Natural killer cell (primary cell): ENCODE measurements at regions of chr9 and their contacts with region 1.

Region 1: DNA sequence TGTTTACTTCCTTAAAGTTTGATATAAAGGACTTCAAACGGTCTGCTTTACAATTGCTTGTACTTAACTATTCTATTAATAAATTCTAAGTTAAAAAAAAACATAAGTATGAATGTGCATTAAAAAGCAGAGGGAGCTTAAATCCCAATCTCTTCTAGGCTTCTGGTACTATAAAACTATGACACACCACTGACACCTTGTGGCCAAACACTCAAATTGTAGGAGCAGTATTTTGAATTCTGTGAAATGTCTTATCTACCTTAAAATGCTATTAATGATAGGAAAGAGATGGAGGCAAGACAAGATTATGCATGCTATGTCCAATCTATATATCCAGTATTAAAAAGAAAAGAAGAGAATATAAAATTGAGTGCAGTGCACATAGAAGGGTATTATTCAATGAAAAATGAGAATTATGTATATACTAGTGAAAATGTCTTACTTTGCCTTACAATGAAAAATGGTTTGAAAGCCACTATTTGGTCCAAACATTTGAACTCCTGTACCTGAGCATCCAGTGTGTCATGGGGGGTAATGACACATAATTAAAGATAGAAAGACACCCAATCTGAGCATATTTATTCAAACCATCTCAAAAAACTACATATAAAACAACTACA is 87.6 kb downstream of the ERP44 start:
- DNase-seq: peak in 1 of 2 donors; percentile 78
- ATAC-seq: peak; percentile 67 to 75 (median 73)
- H3K4me3 ChIP-seq: no peak overlapping the region
- H3K4me3 Mint-ChIP-seq: no peak overlapping the region
- H3K27ac ChIP-seq: no peak overlapping the region
- H3K27ac Mint-ChIP-seq: no peak overlapping the region
- H3K4me1 ChIP-seq: no peaks in the 10 kb centered on the region
- H3K4me1 Mint-ChIP-seq: no peaks in the 10 kb centered on the region
- H3K27me3 ChIP-seq: no peaks in the 10 kb centered on the region
- H3K27me3 Mint-ChIP-seq: no peaks in the 10 kb centered on the region
- CTCF ChIP-seq: peak; percentile 91

Region 2: GRCh38 chr9:99184475-99185347 is 826.5 kb before region 1 on chr9:
- intact Hi-C with region 1: loop called (anchors 1 kb)
- DNase-seq: peak; percentile 70 to 91
- ATAC-seq: peak; percentile 87 to 92 (median 90)
- H3K4me3 ChIP-seq: no peak overlapping the region
- H3K4me3 Mint-ChIP-seq: peak overlapping the region; percentile 57
- H3K27ac ChIP-seq: peak overlapping the region; percentile 27
- H3K27ac Mint-ChIP-seq: peak overlapping the region; percentile 34 to 72
- H3K4me1 ChIP-seq: peaks cover 27% of the 10 kb centered on the region
- H3K4me1 Mint-ChIP-seq: peaks cover 17 to 22% of the 10 kb centered on the region in 2 donors
- H3K27me3 ChIP-seq: no peaks in the 10 kb centered on the region
- H3K27me3 Mint-ChIP-seq: peaks cover 12 to 15% of the 10 kb centered on the region in 2 donors
- CTCF ChIP-seq: peak; percentile 88

Region 3: GRCh38 chr9:99266255-99267023 is 744.7 kb before region 1 on chr9:
- intact Hi-C with region 1: loop called (anchors 2 kb)
- DNase-seq: peak; percentile 58 to 72
- ATAC-seq: peak; percentile 73 to 91 (median 86)
- H3K4me3 ChIP-seq: no peak overlapping the region
- H3K4me3 Mint-ChIP-seq: no peak overlapping the region
- H3K27ac ChIP-seq: no peak overlapping the region
- H3K27ac Mint-ChIP-seq: peak overlapping the region in 1 of 2 donors; percentile 2
- H3K4me1 ChIP-seq: peaks cover 7% of the 10 kb centered on the region
- H3K4me1 Mint-ChIP-seq: peaks cover 11% of the 10 kb centered on the region in 2 donors
- H3K27me3 ChIP-seq: no peaks in the 10 kb centered on the region
- H3K27me3 Mint-ChIP-seq: peaks cover 6 to 15% of the 10 kb centered on the region in 2 donors
- CTCF ChIP-seq: peak; percentile 91

Region 4: DNA sequence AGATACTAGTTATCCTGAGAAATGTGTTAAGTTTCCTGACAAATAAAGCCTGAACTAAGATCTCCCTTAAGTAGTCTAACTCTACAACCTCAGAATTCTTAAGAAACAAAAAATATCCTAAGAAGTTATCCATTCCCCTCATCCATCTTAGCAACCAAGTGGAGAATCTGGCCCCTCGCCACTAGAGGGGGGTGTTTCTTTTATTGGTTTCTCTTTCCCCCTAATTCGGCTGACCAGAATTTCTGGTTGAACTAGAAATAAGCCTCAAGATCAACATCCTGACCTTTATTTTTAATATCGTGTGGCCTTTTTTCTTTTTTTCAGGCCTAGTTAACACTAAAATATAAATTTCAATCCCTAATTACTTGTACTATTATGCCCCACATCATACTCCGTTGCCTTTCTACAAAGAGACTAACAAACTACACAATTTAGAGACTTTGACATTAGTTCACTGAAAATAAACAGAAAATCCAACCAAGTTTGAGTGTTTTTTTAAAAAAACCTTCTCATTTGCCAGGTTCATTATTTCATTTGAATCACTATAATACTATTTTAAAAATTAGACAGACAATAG is 203.8 kb before region 1 on chr9:
- intact Hi-C with region 1: loop called (anchors 1 kb)
- DNase-seq: peak; percentile 49 to 87
- ATAC-seq: peak; percentile 85 to 93 (median 91)
- H3K4me3 ChIP-seq: no peak overlapping the region
- H3K4me3 Mint-ChIP-seq: no peak overlapping the region
- H3K27ac ChIP-seq: no peak overlapping the region
- H3K27ac Mint-ChIP-seq: peak overlapping the region; percentile 2 to 13
- H3K4me1 ChIP-seq: no peaks in the 10 kb centered on the region
- H3K4me1 Mint-ChIP-seq: peaks cover 10% of the 10 kb centered on the region in 2 donors
- H3K27me3 ChIP-seq: no peaks in the 10 kb centered on the region
- H3K27me3 Mint-ChIP-seq: no peaks in the 10 kb centered on the region
- CTCF ChIP-seq: peak; percentile 88